Right ventricle myocardium inferior (tissue), 1 donor: ENCODE measurements at regions of chr12 and their contacts with region 1.

Region 1: DNA sequence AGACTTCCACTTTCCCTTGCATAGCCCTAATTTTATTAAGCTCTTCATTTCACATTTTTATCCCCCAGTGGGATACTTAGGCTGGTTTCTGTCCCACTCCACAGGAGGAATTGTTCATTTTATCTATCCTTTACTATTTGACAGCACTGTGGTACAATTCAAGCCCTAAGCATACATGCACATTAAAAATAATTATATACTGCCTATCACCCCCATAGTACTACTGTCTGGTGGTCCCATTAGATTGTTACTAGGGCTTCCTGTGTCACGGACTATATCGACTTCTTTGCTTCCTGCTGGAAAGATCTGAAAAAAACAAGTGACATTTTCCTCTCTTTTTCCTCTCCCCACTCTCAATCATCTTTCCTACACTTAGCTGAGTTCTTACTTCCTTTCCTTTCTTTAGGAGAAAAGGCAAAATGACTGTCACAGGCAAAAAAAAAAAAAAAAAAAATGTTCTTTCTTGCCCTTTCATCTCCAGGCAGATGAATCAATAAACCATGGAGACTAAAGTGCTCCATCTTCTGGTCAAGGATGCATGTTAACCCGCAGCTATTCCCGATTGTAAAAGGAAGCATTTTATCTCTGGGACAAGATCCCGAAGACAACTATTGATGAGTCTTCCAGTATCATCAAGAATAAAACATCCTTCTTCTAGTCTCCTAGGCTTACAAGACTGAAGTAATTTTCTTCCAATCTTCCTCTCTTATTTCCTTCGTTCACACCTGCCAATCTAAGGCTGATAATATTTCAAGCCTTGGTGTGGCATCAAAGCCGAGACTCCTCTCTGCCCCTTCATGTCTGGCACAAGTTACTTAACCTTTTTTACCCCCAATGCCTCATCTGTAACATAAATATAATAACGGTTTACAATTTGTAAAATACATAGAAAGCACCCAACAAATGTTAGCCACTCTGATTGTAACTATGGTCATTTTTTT is 94.4 kb upstream of the PLEKHG7 start:
- DNase-seq: no peak
- ATAC-seq: no peak

Region 2: DNA sequence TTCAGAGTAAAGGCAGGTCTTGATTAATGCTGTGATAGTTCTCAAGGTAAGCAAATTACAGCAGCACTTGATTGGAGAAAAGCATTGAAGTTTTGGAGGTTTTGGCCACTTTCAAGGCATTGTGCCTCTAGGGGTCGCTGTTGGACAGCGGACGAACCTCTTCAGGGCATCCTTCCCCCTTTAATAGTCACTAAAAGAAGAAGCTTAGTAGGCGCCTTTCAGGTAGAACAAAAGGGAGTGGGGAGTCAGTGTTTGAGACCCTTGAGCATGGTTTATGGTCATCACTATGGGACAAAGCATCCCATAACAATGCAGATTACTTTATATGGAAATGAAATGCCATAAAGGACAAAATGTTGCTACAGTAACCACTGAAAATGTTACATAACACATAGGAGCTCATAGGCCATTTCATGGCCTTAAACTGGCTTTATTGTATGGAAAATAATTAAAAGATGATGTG is 1226.3 kb before region 1 on chr12:
- intact Hi-C with region 1: loop called (anchors 2 kb)
- DNase-seq: peak; percentile 78
- ATAC-seq: peak; percentile 89

Region 3: DNA sequence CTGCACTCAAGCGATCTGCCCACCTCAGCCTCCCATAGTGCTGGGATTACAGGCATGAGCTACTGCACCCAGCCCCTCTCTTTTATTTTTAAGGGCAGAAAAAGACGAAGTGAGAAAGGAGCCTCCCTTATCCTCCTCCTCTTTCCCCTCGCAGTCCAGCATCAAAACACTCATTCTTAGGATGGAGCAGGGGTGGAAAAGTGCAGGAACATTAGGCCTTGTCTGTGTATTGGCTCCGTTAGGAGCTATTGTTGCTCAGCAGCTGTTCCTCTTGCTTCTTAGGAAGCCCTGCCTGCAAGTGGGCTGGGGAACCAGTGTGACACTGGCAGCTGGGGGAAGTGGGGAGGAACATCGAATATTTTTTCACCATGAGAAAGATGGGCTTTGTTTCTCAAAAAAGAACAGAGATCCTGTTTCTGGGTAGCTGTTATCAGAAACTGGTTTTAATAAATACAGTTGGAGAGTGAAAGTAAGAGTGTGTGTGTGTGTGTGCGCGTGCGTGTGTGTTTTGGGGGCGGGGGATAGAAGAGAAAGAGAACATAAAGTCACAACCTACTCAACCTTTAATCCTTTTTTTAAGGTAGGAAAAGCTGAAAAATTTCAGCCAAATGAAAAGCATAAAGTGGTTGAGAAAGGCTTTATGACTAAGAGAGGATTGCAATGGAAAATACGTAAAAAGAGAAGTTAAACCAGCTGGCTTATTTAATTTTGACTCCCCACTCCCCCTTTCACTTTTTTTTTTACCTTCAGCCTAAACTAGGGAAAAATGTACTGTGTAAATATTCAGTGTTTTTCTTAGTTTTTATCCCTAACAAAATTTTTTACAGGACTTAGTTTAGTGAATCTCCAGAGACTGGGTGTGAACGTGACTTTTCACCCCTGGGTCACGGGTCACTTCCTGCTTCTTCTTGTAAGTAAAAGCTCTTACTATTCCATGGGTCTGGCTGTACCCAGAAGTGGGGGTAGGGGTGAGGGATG is 102.9 kb before region 1 on chr12:
- intact Hi-C with region 1: no loop called
- DNase-seq: peak; percentile 78
- ATAC-seq: peak; percentile 55